ENCODE measurements at regions of chr2 and their contacts with region 1.

Region 1: GRCh38 chr2:80238692-80239469 is 65.7 kb downstream of the LRRTM1 start:
- DNase-seq: peak; percentile 10
- H3K4me3 ChIP-seq: no peak overlapping the region
- H3K27ac ChIP-seq: no peak overlapping the region
- H3K27me3 ChIP-seq: no peaks in the 10 kb centered on the region
- CTCF ChIP-seq: peak; percentile 87

Region 2: GRCh38 chr2:79554899-79555298 is 684.0 kb before region 1 on chr2:
- CTCF ChIA-PET with region 1: no interaction called
- POLR2A ChIA-PET with region 1: no interaction called
- DNase-seq: no peak
- H3K4me3 ChIP-seq: no peak overlapping the region
- H3K27ac ChIP-seq: no peak overlapping the region
- H3K27me3 ChIP-seq: no peaks in the 10 kb centered on the region
- CTCF ChIP-seq: no peak

Region 3: DNA sequence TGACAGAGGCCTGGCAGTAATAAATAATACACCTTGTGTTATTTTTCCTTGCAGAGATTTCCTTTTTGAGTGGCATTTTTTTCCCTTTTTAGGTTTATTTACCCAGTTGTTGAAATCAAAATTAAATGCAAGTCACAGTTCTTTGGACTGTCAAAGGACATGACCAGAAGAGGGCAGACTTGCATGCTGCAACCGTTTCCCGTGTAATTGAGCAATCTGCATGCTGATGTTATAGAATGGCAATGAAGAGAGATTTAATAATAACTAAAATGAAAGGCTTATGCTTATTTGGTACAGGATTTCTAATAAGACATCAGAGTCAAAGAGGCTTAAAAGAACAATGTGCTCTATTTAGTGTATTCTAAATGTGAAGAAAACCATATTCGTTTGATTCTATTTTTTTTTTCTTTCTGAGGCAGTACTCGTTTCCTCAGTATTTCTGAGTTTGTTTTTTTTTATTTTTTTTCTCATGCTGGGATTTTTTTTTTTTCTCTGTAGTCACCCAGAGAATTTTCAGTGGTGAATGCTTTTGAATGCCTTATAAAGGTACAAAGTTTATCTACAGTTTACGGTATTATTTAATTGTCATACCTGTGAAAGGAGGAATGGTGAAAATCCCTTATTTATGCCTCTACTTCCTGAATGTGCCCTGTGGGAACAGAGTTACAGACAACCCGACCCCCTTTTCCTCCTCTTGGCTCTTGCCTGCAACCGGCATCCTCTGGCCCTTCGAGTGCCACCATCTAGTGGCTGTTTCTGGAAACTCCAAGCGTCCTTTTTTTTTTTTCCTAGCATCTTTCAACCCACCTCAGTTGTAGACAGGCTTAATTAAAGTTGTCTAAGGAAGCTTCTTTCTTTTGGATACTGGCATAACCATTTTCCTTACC is 302.9 kb before region 1 on chr2:
- CTCF ChIA-PET with region 1: interaction called, 23 read pairs
- POLR2A ChIA-PET with region 1: no interaction called
- DNase-seq: peak; percentile 44
- H3K4me3 ChIP-seq: no peak overlapping the region
- H3K27ac ChIP-seq: no peak overlapping the region
- H3K27me3 ChIP-seq: no peaks in the 10 kb centered on the region
- CTCF ChIP-seq: peak; percentile 84

Region 4: GRCh38 chr2:79994161-79994560 is 244.7 kb before region 1 on chr2:
- CTCF ChIA-PET with region 1: interaction called, 12 read pairs
- POLR2A ChIA-PET with region 1: no interaction called
- DNase-seq: no peak
- H3K4me3 ChIP-seq: no peak overlapping the region
- H3K27ac ChIP-seq: no peak overlapping the region
- H3K27me3 ChIP-seq: no peaks in the 10 kb centered on the region
- CTCF ChIP-seq: no peak

Region 5: DNA sequence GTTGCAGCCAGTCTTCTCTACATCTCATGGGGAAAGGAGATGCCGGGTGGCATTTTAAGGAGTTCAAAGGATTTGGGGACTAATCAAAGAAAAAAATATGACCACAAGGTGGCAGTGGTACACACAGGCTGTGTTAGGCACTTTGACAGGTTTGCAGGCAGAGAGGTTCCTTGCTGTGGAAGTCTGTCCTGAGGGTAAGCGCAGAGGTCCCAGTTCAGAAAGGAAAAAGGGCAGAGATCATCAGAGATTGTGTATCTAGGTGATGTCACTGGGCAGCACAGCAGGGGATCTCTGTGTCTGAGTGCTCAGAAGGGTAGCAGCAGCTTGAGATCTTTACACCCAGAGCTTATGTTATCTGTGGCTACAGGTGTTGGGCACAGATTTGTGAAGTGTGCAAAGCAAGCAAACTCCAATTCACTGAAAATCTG is 165.7 kb before region 1 on chr2:
- CTCF ChIA-PET with region 1: interaction called, 74 read pairs
- POLR2A ChIA-PET with region 1: interaction called, 3 read pairs
- DNase-seq: peak; percentile 43
- H3K4me3 ChIP-seq: no peak overlapping the region
- H3K27ac ChIP-seq: no peak overlapping the region
- H3K27me3 ChIP-seq: no peaks in the 10 kb centered on the region
- CTCF ChIP-seq: peak; percentile 79

Region 6: GRCh38 chr2:80080957-80081356 is 157.9 kb before region 1 on chr2:
- CTCF ChIA-PET with region 1: interaction called, 47 read pairs
- POLR2A ChIA-PET with region 1: no interaction called
- DNase-seq: no peak
- H3K4me3 ChIP-seq: no peak overlapping the region; the same call in 1 of the 2 replicates
- H3K27ac ChIP-seq: no peak overlapping the region
- H3K27me3 ChIP-seq: no peaks in the 10 kb centered on the region
- CTCF ChIP-seq: no peak

Region 7: DNA sequence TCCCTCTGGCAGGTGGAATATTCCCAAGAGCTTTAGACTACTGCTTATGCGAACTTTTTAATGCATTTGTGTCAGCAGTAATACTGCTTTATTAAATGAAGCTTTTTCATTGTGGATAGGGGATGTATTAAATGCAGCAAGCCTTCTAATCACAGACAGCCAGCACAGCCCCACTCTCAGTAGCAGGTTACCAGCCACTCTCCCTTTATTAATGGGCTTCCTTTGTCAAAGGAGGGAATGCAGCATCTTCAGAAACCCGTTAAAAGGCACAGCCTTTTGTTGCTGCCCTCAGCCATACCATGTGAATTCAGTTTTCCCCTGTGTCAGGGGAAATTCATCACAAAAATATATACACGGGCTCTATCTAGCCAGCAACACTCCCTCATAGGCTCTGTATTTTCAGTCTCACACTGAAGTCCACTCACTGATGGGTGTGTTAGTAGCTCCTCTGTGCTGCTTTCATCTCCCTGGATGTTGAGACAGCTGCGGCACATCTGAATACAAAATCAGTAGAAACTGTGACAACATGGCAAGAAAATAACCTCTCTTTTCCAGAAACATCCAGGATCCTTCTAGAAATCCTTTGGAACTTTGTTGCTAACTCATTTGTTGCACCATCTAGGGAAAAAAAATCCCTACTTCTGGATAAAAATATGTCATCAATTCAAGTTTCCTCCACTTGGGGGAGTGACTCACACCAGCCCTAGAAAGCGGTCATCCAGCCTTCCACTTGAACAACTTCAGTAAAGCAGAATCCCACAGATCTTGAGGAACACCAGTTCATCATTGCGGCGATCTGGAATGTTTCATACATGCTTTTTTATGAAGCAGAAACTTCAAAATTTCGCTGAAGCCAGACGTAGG is 17.3 kb after region 1 on chr2:
- CTCF ChIA-PET with region 1: interaction called, 10 read pairs
- POLR2A ChIA-PET with region 1: no interaction called
- DNase-seq: no peak
- H3K4me3 ChIP-seq: no peak overlapping the region
- H3K27ac ChIP-seq: no peak overlapping the region
- H3K27me3 ChIP-seq: no peaks in the 10 kb centered on the region
- CTCF ChIP-seq: peak; percentile 52